Left cardiac atrium (tissue), 4 donors: ENCODE measurements at regions of chr16 and their contacts with region 1.

Region 1: DNA sequence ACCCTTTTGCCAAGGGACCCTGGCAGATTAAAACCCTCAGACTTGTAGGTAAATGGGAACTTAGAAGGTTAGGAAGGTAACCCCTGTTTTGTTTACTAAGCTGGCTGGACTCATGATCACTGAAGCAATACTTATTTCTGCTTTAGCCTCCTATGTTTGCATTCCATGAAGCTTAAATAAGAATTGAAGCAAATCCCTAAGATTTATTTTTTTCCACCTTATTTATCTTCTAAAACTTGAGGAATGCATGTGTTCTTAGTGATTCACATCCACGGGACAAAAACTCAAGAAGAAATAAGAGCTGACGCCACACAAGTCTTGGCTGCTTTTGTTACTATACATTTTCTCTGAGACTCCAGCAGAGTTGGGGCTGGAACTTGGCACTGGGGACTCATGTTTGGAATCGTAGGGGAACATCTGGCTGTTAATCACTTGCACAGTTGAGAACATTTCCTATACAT is 35.5 kb downstream of the CLUAP1 start:
- DNase-seq: no peak
- ATAC-seq: no peak

Region 2: DNA sequence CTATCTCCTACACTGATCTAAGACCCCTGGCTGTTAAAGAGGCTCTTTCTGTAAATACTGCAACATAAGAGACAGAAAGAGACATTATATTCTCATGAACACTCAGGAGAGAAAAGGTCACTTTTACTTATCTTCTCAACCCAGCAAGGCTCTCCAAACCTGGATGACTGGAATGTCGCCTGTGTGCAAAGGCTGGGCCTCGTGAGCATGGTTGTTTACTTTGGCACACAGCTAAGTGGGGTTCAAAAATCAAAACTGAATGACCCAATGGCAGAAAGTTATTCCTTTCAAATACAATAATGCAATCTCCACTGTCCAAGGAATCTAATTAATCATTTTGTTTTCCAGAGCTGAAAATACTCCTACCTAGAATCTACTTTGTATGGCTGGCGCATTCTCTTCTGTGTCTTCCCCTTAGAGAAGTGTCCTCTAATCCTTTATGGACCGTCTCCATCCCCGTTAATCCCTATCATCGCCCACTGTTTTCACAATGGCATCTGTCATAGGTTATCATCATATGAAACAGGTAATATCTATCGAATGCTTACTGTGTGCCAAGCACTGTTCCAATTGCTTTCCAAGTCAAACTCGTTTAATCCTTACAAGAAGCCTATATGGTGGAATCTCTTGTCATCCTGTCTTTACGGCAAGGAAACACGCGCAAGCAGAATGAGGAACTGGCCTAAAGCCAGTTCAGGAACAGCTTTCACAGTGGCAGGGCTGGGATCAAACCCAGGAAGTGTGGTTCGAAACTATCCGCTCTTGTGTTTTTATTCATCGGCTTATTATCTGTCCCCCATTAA is 73.8 kb after region 1 on chr16:
- intact Hi-C with region 1: loop called in 1 of 2 experiments (anchors 10 kb)
- DNase-seq: no peak
- ATAC-seq: no peak

Region 3: GRCh38 chr16:3654249-3654991 is 118.1 kb after region 1 on chr16 and contains the start of gene DNASE1:
- intact Hi-C with region 1: no loop called
- DNase-seq: peak; percentile 55
- ATAC-seq: peak; percentile 50 to 69
- total RNA-seq, gene DNASE1: 3.0 to 5.8 TPM